ENCODE measurements at regions of chr1 and their contacts with region 1.

Region 1: DNA sequence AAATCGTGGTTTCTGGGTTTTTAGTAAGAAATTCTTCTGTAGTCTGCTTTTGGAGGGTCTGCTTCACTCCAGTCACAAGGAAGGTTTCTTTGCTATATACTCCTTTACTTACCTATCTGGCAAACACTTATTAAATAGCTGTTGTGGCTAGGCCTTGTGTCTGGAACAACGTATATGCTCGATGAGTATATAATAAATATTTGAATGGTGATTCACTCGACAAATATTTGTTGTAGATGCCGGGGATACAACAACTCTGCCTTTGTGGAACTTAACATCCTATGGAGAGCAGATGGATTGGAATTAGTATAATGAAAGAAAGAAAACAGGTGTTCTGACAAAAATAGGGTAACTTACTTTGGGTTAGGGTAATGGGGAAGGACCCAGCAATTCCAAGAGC is 31.1 kb downstream of the KPNA6 start:
- DNase-seq: no peak
- ATAC-seq: no peak
- H3K4me3 ChIP-seq: no peak overlapping the region
- H3K27ac ChIP-seq: peak overlapping the region; percentile 27; the same call in 1 of the 3 replicates
- H3K4me1 ChIP-seq: peaks cover 6 to 19% of the 10 kb centered on the region in 2 experiments
- H3K27me3 ChIP-seq: no peaks in the 10 kb centered on the region
- CTCF ChIP-seq: no peak
- EP300 ChIP-seq: no peak
- POLR2A ChIP-seq: no peak
- RAD21 ChIP-seq: no peak

Region 2: DNA sequence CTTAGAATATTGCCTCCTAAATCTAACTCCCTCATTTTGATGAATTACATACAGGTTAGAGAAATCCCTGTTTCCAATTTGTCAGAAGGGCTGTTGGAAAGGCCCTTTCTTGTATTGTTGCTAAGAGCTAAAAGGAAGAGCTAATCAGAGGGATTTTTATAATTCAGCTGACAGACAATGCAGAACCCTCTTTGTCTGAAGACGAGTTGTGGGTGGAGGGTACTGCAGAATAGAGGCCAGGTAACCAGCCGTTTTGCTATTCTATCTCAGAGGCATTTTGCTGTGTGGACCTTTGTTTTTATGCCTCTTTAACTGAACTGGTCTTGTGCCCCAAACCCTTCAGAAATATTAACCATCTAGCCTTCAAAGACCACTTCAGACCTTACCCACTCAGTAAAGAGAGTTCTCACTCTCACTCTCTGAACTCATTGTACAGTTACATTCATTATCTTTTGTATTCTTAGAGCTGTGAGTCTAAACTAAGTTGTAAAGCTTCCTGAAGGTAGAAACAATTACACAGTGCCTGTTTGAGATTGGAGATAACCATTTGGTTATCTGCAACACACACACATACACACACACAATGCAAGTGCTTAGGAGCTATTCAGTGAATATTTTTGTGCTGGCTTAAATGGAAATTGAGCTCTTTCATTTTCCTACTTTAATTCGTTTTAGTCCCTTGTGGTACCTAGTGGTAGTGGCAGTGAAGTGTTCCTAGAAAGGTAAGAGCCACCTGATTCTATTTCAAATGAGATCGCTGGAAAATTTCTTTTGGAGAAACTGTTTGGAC is 11.3 kb before region 1 on chr1:
- CTCF ChIA-PET with region 1: no interaction called
- POLR2A ChIA-PET with region 1: interaction called, 23 read pairs
- in situ Hi-C with region 1: no loop called
- intact Hi-C with region 1: no loop called
- DNase-seq: peak; percentile 44 to 73 (median 50)
- ATAC-seq: peak; percentile 52
- H3K4me3 ChIP-seq: no peak overlapping the region
- H3K27ac ChIP-seq: peak overlapping the region; percentile 74
- H3K4me1 ChIP-seq: peaks cover 42 to 61% of the 10 kb centered on the region in 2 experiments
- H3K27me3 ChIP-seq: no peaks in the 10 kb centered on the region
- CTCF ChIP-seq: peak in 2 of 3 experiments; percentile 29 to 33; a peak in 2 of 6 replicates
- EP300 ChIP-seq: peak; percentile 92
- POLR2A ChIP-seq: no peak
- RAD21 ChIP-seq: no peak

Measured in K562 (cell line).